ENCODE measurements at regions of chr2 and their contacts with region 1.

Region 1: DNA sequence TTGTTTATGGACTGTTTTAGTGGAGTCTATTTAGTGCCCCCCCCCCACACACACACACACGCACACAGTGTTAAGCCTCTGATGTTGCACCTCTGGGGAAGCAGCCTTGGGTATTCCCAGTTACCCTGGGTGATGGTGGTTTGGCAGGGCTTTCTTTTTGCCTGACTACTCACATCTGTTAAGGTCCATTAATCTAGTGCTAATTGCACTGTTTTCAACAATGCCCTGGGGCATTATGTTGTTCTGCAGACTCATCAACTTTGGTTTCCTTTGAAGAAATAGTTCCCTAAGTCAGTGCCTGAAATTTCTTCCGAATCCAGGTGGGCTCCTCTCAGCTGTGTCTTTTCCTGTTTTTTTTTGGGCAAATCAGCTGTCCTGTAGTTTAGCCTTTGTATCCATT is 34.7 kb downstream of the SPOPL start:
- DNase-seq: no peak
- ATAC-seq: peak; percentile 93
- H3K4me3 Mint-ChIP-seq: peak overlapping the region; percentile 55
- H3K27ac Mint-ChIP-seq: peak overlapping the region; percentile 59
- H3K4me1 Mint-ChIP-seq: peaks cover 74% of the 10 kb centered on the region
- H3K27me3 Mint-ChIP-seq: no peaks in the 10 kb centered on the region
- CTCF ChIP-seq: no peak

Region 2: DNA sequence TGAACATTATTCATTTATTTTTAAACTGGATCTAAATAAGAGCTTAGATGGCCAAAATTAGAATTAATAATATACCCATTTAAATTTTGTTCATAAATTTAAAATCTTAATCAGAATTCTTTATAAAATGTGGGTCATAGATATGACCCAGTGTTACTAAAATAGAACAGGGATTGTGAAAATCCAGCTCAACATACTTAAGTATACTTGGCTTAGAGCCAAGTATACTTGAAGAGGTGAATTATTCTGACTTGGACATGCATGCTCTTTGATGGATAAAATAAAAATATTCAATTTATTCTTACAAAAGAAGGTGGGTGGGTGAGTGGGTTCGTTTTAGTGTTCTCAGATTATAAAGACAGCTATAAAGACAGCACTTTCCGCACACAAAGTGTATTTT is 36.0 kb after region 1 on chr2:
- CTCF ChIA-PET with region 1: no interaction called
- POLR2A ChIA-PET with region 1: no interaction called
- intact Hi-C with region 1: no loop called
- DNase-seq: no peak
- ATAC-seq: no peak
- H3K4me3 Mint-ChIP-seq: no peak overlapping the region
- H3K27ac Mint-ChIP-seq: no peak overlapping the region
- H3K4me1 Mint-ChIP-seq: no peaks in the 10 kb centered on the region
- H3K27me3 Mint-ChIP-seq: no peaks in the 10 kb centered on the region
- CTCF ChIP-seq: no peak

Region 3: GRCh38 chr2:138622613-138623012 is 86.3 kb after region 1 on chr2:
- CTCF ChIA-PET with region 1: no interaction called
- POLR2A ChIA-PET with region 1: interaction called, 17 read pairs
- intact Hi-C with region 1: no loop called
- DNase-seq: no peak
- ATAC-seq: no peak
- H3K4me3 Mint-ChIP-seq: no peak overlapping the region
- H3K27ac Mint-ChIP-seq: no peak overlapping the region
- H3K4me1 Mint-ChIP-seq: peaks cover 3% of the 10 kb centered on the region
- H3K27me3 Mint-ChIP-seq: peaks cover 15% of the 10 kb centered on the region
- CTCF ChIP-seq: no peak

Region 4: GRCh38 chr2:138853296-138853695 is 317.0 kb after region 1 on chr2:
- CTCF ChIA-PET with region 1: no interaction called
- POLR2A ChIA-PET with region 1: interaction called, 11 read pairs
- intact Hi-C with region 1: no loop called
- DNase-seq: no peak
- ATAC-seq: no peak
- H3K4me3 Mint-ChIP-seq: no peak overlapping the region
- H3K27ac Mint-ChIP-seq: no peak overlapping the region
- H3K4me1 Mint-ChIP-seq: no peaks in the 10 kb centered on the region
- H3K27me3 Mint-ChIP-seq: no peaks in the 10 kb centered on the region
- CTCF ChIP-seq: no peak

Region 5: DNA sequence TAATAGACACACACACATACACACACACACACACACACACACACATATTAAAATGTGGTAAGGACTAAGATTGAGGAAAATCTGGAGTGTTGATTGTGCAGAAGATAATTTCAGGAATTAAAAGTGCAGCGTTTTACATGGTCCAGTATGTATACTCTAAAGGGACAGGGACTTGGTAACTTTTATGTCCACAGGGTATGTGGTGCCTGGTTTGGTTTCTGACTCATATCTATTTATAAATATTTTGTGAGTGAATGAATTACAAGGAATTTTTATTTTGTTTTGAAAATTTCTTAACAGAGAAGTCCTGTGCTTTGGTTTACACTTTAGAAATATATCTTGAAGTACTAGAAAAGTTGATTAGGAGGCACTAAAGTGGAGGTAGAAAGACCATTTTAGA is 531.6 kb after region 1 on chr2:
- CTCF ChIA-PET with region 1: no interaction called
- POLR2A ChIA-PET with region 1: no interaction called
- intact Hi-C with region 1: no loop called
- DNase-seq: no peak
- ATAC-seq: no peak
- H3K4me3 Mint-ChIP-seq: no peak overlapping the region
- H3K27ac Mint-ChIP-seq: no peak overlapping the region
- H3K4me1 Mint-ChIP-seq: no peaks in the 10 kb centered on the region
- H3K27me3 Mint-ChIP-seq: no peaks in the 10 kb centered on the region
- CTCF ChIP-seq: no peak

Region 6: GRCh38 chr2:140451324-140451723 is 1915.0 kb after region 1 on chr2:
- CTCF ChIA-PET with region 1: no interaction called
- POLR2A ChIA-PET with region 1: no interaction called
- intact Hi-C with region 1: no loop called
- DNase-seq: no peak
- ATAC-seq: no peak
- H3K4me3 Mint-ChIP-seq: no peak overlapping the region
- H3K27ac Mint-ChIP-seq: no peak overlapping the region
- H3K4me1 Mint-ChIP-seq: no peaks in the 10 kb centered on the region
- H3K27me3 Mint-ChIP-seq: no peaks in the 10 kb centered on the region
- CTCF ChIP-seq: no peak